ENCODE measurements at regions of chr2 and their contacts with region 1.

Region 1: DNA sequence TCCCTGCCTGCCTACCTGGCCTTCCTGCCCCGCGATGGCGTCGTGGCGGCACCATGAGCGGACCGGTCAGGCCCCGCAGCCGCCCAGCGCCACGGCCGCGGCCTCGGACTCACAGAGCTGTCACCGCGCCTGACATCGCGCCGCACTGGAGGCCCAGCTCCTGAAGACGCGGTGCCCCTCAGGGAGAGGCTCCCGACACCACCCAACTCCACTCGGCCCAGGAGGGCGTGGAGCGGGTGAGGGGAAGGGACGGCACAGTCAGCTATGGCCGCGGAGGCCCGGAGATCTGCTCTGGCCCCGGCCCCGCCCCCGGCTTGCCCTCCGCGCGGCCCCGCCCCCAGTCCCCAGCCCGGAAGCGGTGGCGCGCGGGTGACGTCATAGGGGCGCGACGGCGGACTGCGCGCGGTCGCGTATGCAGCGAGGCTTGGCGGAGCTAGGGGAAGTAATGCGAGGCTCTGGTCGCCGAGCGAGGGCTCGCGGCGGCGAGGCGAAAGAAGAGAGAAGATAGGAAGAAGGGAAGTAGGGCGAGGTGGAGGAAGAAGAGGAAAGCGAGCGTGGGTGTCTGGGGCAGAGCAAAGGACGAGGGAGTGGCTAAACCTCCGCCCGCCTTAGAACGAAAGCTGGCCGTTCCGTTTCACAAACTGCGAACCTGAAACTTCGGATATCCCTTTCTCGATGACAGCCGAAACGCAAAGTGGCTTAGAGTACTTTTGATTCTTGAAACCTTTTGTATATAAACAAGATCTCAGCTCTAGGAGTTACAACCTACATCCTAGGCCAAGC is at the start of gene SLC35F5:
- DNase-seq: peak; percentile 92
- ATAC-seq: peak; percentile 89
- H3K4me3 Mint-ChIP-seq: peak within 1 kb of the TSS; percentile 93
- H3K27ac Mint-ChIP-seq: peak within 1 kb of the TSS; percentile 99
- H3K4me1 Mint-ChIP-seq: peaks cover 28% of the 10 kb centered on the region
- H3K27me3 Mint-ChIP-seq: peaks cover 2% of the 10 kb centered on the region
- total RNA-seq, gene SLC35F5: 16.5 to 17.1 TPM

Region 2: GRCh38 chr2:113876503-113877387 is 120.2 kb after region 1 on chr2:
- CTCF ChIA-PET with region 1: no interaction called
- POLR2A ChIA-PET with region 1: interaction called, 18 read pairs
- DNase-seq: peak; percentile 89
- ATAC-seq: peak; percentile 94
- H3K4me3 Mint-ChIP-seq: peak overlapping the region; percentile 52
- H3K27ac Mint-ChIP-seq: peak overlapping the region; percentile 89
- H3K4me1 Mint-ChIP-seq: peaks cover 67% of the 10 kb centered on the region
- H3K27me3 Mint-ChIP-seq: no peaks in the 10 kb centered on the region

Region 3: DNA sequence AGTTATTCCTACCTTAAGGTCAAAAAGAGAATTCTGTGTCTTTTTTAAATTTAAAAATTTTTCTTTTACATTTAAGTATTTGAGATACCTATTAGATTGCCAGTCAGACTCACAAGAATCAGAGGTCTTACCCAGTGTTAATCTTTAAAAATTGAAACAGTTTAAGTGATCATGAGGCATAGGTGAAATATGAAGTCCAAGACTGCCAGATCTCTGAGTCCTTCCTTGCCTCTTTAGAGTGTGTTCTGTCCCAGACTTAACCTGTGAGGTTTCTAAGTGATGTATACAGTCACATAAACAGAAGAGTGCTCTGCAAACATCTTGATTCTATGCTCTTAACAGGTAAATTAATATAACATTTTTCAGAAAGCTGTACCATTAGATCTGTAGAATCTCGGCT is 173.9 kb after region 1 on chr2:
- CTCF ChIA-PET with region 1: no interaction called
- POLR2A ChIA-PET with region 1: no interaction called
- DNase-seq: no peak
- ATAC-seq: no peak
- H3K4me3 Mint-ChIP-seq: no peak overlapping the region
- H3K27ac Mint-ChIP-seq: no peak overlapping the region
- H3K4me1 Mint-ChIP-seq: peaks cover 17% of the 10 kb centered on the region
- H3K27me3 Mint-ChIP-seq: no peaks in the 10 kb centered on the region

Measured in activated CD8-positive, alpha-beta T cell treated with anti-CD3 and anti-CD28 coated beads, Interleukin-2, amount 10 ng/mL, durations not matched to agents 7 days and 5 days (primary cell).